Activated CD4-positive, alpha-beta memory T cell treated with anti-CD3 and anti-CD28 coated beads for 36 hours (primary cell): ENCODE measurements at regions of chr16 and their contacts with region 1.

Region 1: DNA sequence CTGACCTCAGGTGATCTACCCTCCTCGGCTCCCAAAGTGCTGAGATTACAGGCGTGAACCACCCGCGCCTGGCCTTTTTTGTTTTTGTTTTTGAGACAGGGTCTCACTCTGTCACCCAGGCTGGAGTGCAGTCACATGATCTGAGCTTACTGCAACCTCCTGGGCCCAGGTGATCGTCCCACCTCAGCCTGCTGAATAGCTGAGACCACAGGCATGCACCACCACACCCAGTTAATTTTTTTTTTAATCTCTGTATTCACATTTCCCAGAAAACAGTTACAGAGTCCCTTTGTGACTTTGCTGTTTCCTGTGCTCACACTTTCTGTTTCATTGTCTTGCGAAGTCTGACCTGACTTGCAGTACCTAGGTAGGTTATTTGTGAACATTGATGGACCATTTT is 2.7 kb downstream of the CLUAP1 start:
- DNase-seq: peak; percentile 75
- H3K4me3 Mint-ChIP-seq: peak overlapping the region; percentile 65
- H3K27ac Mint-ChIP-seq: peak overlapping the region; percentile 84
- H3K4me1 Mint-ChIP-seq: peaks cover 62% of the 10 kb centered on the region
- H3K27me3 Mint-ChIP-seq: no peaks in the 10 kb centered on the region

Region 2: DNA sequence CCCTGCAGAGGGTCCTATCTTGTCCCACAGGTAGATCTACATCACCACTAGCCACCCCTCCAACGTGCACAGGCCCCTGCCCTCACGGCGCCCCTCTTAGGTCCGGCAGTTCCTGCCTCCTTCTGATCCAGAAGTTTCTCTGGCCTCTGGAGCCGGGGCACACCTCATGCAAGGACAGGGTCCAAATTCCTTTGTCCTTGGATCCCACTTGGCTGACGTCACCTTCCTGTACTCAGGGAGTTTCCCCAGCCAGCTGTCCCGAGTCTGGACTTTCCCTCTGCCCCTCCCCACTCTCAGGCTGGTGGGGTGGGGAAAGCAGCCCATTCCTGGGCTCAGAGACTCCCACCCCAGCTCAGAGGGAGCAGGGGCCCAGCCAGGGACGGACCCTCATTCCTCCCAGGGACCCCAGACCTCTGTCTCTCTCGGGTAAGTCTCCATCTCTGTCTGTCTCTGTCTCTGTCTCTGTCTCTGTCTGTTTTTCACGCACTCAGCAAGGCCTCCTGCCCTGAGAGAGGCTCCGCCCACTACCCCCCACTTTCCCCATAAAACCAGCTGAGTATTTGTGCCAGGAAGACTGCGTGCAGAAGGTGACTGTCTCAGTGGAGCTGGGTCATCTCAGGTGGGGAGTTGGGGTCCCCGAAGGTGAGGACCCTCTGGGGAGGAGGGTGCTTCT is 438.3 kb before region 1 on chr16 and contains the start of gene IL32:
- CTCF ChIA-PET with region 1: no interaction called
- POLR2A ChIA-PET with region 1: no interaction called
- intact Hi-C with region 1: no loop called
- DNase-seq: peak; percentile 87
- H3K4me3 Mint-ChIP-seq: peak within 1 kb of the TSS; percentile 99
- H3K27ac Mint-ChIP-seq: peak within 1 kb of the TSS; percentile 100
- H3K4me1 Mint-ChIP-seq: peaks cover 67% of the 10 kb centered on the region
- H3K27me3 Mint-ChIP-seq: peaks cover 4% of the 10 kb centered on the region
- total RNA-seq, gene IL32: 2,504 to 2,532 TPM

Region 3: GRCh38 chr16:3173892-3174617 is 329.5 kb before region 1 on chr16:
- CTCF ChIA-PET with region 1: no interaction called
- POLR2A ChIA-PET with region 1: no interaction called
- intact Hi-C with region 1: loop called (anchors 1 kb)
- DNase-seq: peak; percentile 57
- H3K4me3 Mint-ChIP-seq: peak overlapping the region; percentile 71
- H3K27ac Mint-ChIP-seq: peak overlapping the region; percentile 19
- H3K4me1 Mint-ChIP-seq: peaks cover 34% of the 10 kb centered on the region
- H3K27me3 Mint-ChIP-seq: peaks cover 51% of the 10 kb centered on the region

Region 4: DNA sequence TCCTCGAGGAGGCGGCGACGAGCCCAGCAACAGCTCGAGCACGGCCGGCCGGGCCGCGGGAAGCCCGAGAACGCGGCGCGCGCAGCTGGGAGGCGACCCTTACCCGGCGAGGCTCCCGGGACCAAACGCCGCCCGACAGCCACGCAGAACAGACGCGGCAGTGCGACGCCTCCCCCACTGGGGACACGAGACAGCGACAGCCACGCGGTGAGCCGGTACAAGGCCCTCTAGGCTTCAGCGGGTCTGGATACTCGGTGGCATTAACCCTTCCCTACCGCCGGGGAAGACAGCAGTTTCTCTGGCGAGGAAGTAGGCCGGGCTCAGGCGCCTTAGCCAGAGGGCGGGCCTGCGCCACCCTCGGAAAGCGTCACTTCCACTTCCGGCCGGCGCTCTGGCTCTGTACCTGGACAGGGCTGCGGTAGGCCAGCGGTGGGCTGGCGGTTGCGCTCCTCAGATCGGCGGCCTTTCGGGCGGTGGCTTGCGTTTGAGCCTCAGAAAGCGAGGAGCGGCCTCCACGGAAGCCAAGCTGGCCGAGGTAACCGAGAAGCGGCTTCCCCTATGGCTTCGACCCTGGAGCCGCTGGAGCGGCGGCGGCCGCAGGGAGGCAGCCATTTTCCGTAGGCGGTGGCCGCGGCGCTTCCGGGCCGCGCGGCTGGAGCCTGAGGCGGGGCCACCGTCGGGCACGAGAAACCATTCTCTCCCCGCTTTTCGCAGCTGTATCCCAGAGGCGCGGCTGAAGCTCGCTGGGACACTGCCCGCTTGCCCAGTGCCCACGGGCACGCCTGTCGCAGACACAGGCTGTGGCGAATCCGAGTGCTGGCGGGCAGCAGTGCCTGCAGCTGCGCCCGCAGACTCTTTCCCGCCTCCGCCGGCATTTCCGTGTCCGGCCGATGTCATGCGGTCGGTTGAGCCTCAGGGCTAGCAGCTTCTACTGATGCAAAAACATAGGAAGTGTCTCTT is 198.1 kb before region 1 on chr16 and contains the starts of genes TIGD7 and ZNF75A:
- CTCF ChIA-PET with region 1: no interaction called
- POLR2A ChIA-PET with region 1: no interaction called
- intact Hi-C with region 1: loop called (anchors 1 kb)
- DNase-seq: peak; percentile 88
- H3K4me3 Mint-ChIP-seq: peak within 1 kb of the TSS; percentile 71
- H3K27ac Mint-ChIP-seq: peak within 1 kb of the TSS; percentile 79
- H3K4me1 Mint-ChIP-seq: peaks cover 12% of the 10 kb centered on the region
- H3K27me3 Mint-ChIP-seq: no peaks in the 10 kb centered on the region
- total RNA-seq, gene TIGD7: 3.3 to 3.4 TPM
- total RNA-seq, gene ZNF75A: 19.3 to 20.0 TPM

Region 5: DNA sequence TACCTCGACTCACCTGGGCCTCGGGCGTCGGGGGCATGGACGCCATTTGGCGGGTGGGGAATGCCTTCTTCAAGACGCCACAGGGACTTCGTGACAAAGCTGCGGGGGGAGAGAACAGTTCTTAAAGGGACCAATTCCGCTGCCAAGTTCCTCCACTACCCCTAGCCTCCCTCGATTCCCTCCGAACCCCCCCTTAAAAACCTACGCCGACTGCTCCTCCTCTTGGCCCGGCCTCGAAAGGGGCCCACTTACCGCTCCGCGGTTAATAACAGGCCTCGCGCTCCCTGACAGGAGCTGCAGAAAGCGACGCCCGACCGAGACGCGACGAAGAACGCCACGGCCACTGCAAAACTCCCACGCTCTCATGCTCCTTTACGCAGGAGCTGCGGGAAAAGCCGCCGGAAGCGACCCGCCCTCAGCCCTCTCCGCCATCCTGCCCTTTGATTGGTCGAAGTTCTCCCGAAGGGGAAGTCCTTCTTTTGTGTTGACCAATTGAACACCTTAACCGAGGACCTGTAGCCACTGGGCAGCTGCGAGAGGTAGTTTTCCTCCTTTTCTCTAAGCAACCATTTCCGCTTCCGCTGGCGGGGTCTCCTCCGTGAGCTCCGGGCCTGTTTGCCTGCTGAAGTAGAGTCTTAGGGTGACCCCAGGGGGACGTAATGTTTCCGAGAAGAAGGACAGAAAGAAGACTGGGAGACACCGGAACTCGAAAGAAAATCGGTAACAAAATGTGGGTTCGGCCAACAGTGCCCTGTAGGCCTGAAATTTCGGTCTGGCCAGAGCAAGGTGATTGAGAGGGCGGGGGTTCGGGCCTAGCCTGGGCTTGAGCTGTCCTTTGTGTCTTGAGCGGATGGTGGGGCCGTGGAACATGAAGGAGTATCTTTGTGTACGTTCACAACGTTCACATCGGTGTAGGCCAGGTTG is 60.2 kb before region 1 on chr16 and contains the starts of genes NAA60 and ZNF597:
- CTCF ChIA-PET with region 1: interaction called, 8 read pairs
- POLR2A ChIA-PET with region 1: no interaction called
- intact Hi-C with region 1: loop called (anchors 1 kb)
- DNase-seq: peak; percentile 89
- H3K4me3 Mint-ChIP-seq: peak within 1 kb of the TSS; percentile 97
- H3K27ac Mint-ChIP-seq: peak within 1 kb of the TSS; percentile 95
- H3K4me1 Mint-ChIP-seq: peaks cover 15% of the 10 kb centered on the region
- H3K27me3 Mint-ChIP-seq: no peaks in the 10 kb centered on the region
- total RNA-seq, gene NAA60: 26.9 to 34.1 TPM
- total RNA-seq, gene ZNF597: 1.6 to 2.1 TPM

Region 6: GRCh38 chr16:3611146-3611975 is 107.8 kb after region 1 on chr16 and contains the start of gene SLX4:
- CTCF ChIA-PET with region 1: no interaction called
- POLR2A ChIA-PET with region 1: no interaction called
- intact Hi-C with region 1: loop called (anchors 1 kb)
- DNase-seq: peak; percentile 94
- H3K4me3 Mint-ChIP-seq: peak within 1 kb of the TSS; percentile 95
- H3K27ac Mint-ChIP-seq: peak within 1 kb of the TSS; percentile 89
- H3K4me1 Mint-ChIP-seq: peaks cover 43% of the 10 kb centered on the region
- H3K27me3 Mint-ChIP-seq: no peaks in the 10 kb centered on the region
- total RNA-seq, gene SLX4: 13.4 to 15.3 TPM